PC-3 (cell line): ENCODE measurements at regions of chr15 and their contacts with region 1.

Region 1: GRCh38 chr15:75982468-75982867 is 29.8 kb downstream of the NRG4 start:
- DNase-seq: no peak
- ATAC-seq: no peak
- H3K4me3 ChIP-seq: no peak overlapping the region
- H3K27ac ChIP-seq: no peak overlapping the region
- H3K4me1 ChIP-seq: no peaks in the 10 kb centered on the region
- H3K27me3 ChIP-seq: peaks cover 13% of the 10 kb centered on the region; the same call in 1 of the 2 replicates
- CTCF ChIP-seq: no peak

Region 2: DNA sequence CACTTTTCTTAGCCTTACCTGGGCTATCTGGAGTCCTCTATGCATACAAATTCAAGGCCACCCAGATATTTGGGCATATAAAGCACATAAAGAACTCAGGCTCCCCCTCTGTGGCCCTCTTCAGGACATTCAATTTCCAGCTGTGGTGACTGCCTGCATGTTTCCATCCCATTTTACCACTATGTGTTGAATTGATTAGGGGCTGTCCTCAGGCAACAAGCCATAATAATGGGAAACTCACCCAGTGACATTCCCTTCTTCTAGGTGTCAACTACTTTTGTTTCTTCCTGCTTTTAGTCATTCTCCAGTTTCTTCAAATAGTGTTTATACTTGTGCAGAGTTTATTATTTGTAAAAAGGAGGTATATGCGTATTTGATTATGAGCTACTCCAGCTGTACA is 11.8 kb after region 1 on chr15:
- CTCF ChIA-PET with region 1: no interaction called
- POLR2A ChIA-PET with region 1: no interaction called
- intact Hi-C with region 1: no loop called
- DNase-seq: no peak
- ATAC-seq: no peak
- H3K4me3 ChIP-seq: no peak overlapping the region
- H3K27ac ChIP-seq: no peak overlapping the region
- H3K4me1 ChIP-seq: no peaks in the 10 kb centered on the region
- H3K27me3 ChIP-seq: 0 out of 2 replicates have a peak, but pooled peaks cover 7% of the 10 kb centered on the region
- CTCF ChIP-seq: no peak

Region 3: DNA sequence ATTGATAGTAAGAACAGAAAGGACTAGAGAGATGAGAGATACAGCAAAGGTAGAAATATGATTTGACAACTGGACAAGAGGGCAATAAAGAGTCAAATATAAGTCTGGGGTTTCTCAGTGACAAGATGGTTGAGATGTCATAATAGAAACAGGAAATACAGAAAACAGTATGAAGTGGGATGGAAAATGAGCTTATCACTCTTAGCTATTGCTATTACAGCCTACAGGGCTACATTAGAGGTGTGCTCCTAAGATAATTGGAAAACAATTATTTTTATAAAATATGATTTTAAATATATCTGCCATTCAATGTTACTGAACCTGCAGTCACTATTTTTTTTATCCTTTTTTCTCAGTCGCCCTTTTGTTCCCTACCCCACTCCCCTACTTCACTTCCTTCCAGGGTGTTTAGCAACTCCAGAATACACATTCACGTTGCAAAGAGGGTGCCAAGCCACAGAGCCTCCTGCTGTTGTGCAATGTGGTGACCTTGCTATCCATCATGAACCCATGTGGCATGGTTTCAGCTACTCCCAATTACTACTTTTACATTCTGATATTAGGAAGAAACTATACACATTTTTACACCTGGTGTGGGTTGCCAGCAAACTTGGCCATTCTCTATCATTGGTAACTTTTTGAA is 23.8 kb after region 1 on chr15:
- CTCF ChIA-PET with region 1: no interaction called
- POLR2A ChIA-PET with region 1: no interaction called
- intact Hi-C with region 1: loop called (anchors 1 kb)
- DNase-seq: peak; percentile 10
- ATAC-seq: no peak
- H3K4me3 ChIP-seq: no peak overlapping the region
- H3K27ac ChIP-seq: no peak overlapping the region
- H3K4me1 ChIP-seq: no peaks in the 10 kb centered on the region
- H3K27me3 ChIP-seq: peaks cover 21% of the 10 kb centered on the region
- CTCF ChIP-seq: no peak